Dendritic cell treated with granulocyte-macrophage colony-stimulating factor and Interleukin-4, amounts not matched to agents 40 ng/mL and 50 ng/mL, for 4 days (primary cell): ENCODE measurements at regions of chr21 and their contacts with region 1.

Region 1: DNA sequence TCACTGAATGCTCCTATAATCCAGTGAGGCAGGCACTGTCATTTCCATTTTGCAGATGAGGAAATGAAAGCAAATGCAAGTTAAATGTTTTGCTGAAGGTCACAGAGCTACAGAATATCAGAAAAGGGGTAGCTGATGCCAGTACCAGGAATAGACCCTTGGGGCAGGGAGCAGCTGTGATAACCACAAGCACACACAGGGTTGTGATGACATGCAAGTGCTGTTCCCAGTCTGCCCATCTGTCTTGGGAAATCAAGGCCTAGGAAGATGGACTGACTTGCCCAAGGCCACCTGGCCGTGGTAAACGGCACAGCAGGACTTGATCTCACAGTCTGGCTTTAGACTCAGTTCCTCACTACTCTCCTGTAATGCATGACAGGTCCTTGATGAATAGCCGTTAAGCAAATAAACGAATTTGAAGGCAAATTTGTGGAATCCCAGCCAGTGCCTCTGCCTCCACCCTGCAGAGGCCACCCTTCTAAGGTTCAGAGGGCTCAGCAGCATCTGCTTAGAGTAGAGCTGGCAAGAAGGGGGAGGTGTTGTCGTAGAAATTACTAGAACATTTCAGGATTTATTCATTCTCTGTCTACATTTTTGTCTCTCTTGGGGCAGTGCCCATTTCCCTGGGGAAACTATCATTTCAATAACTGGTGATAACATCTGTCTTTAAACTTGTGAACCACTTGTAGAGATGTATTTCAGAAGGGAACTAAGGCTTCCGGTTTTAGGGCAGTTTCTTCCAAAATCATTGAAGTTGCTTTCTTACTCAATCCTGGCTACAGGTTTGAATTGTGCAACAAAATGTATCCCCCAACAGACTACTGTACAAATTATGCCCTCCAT is 53.2 kb upstream of the MRPS6 start:
- H3K4me3 Mint-ChIP-seq: peak overlapping the region; percentile 13
- H3K27ac Mint-ChIP-seq: peak overlapping the region; percentile 74
- H3K4me1 Mint-ChIP-seq: peaks cover 32% of the 10 kb centered on the region
- H3K27me3 Mint-ChIP-seq: no peaks in the 10 kb centered on the region

Region 2: GRCh38 chr21:33924079-33924765 is 96.0 kb before region 1 on chr21:
- intact Hi-C with region 1: loop called (anchors 2 kb)
- H3K4me3 Mint-ChIP-seq: no peak overlapping the region
- H3K27ac Mint-ChIP-seq: peak overlapping the region; percentile 31
- H3K4me1 Mint-ChIP-seq: peaks cover 14% of the 10 kb centered on the region
- H3K27me3 Mint-ChIP-seq: peaks cover 11% of the 10 kb centered on the region

Region 3: GRCh38 chr21:33936301-33937038 is 83.8 kb before region 1 on chr21:
- intact Hi-C with region 1: loop called (anchors 5 kb)
- H3K4me3 Mint-ChIP-seq: no peak overlapping the region
- H3K27ac Mint-ChIP-seq: peak overlapping the region; percentile 64
- H3K4me1 Mint-ChIP-seq: peaks cover 70% of the 10 kb centered on the region
- H3K27me3 Mint-ChIP-seq: no peaks in the 10 kb centered on the region

Region 4: DNA sequence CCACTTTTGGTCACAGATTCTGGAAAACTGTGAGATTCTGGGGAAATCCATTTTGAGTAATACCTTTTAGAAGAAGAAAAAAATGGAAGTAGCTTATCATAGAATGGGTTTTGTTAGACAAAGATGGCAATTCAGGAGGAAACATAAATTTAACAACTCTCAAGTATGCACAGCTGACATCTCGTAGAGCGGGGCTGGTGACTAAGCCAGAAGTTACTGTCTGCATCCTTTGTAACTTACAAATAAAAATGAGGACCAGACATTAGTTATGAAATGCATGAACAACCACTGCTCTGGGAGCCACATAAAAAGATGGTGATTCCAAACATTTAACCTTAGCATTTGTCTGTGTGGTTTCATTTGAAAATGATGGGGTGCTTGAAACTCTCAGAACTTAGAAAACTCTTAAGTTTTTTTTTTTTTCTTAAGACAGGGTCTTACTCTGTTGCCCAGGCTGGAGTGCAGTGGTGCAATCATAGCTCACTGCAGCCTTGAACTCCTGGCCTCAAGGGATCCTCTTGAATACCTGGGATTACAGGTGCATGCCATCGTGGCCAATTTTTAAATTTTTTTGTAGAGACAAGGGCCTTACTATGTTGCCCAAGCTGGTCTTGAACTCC is 55.4 kb before region 1 on chr21:
- intact Hi-C with region 1: no loop called
- H3K4me3 Mint-ChIP-seq: no peak overlapping the region
- H3K27ac Mint-ChIP-seq: peak overlapping the region; percentile 20
- H3K4me1 Mint-ChIP-seq: peaks cover 41% of the 10 kb centered on the region
- H3K27me3 Mint-ChIP-seq: peaks cover 2% of the 10 kb centered on the region

Region 5: DNA sequence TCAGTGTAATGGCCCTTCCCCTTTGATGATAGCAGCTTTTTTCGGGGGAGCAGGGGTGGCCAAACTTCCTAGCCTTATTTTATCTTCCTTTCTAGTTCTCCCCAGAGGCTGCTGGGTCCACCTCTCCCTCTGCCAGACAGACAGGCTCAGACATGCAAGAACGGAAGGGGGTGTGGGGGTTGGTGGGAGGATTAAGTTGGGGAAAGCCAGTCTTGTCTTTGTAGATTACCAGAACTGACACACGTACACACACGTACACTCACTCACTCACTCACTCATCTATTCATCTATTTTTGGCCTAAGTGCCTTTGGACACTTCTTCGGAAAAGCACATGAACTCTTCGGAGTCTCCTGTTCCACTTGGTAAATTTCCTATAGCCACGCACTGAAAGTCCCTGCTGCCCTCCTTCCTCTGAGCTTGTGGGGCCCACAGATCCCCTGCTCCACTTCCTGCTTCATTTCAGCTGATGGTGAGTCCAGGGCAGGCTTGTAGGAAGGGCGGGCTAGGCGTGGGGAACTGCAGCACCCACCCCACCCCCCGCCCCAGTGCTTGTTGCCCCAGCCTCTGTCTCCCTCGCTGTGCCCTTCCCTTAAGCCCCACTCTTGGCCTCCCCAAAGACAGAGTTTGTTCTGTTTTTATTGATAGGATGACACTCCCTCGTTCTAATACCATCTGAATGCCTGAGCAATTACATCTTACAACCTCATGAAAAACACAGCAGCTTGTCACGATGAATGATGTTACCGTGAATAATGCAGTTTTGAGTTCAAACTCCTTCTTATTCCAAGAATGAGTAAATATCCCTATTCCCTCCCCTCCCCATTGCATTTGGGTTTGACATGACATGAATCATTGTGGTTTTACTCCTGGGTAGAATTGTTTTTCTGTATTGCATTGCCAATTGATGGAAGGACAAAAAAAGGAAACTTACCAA is 43.9 kb before region 1 on chr21:
- intact Hi-C with region 1: loop called (anchors 1 kb)
- H3K4me3 Mint-ChIP-seq: peak overlapping the region; percentile 64
- H3K27ac Mint-ChIP-seq: peak overlapping the region; percentile 99
- H3K4me1 Mint-ChIP-seq: peaks cover 77% of the 10 kb centered on the region
- H3K27me3 Mint-ChIP-seq: no peaks in the 10 kb centered on the region

Region 6: GRCh38 chr21:34055615-34056014 is 35.4 kb after region 1 on chr21:
- intact Hi-C with region 1: loop called (anchors 5 kb)
- H3K4me3 Mint-ChIP-seq: no peak overlapping the region
- H3K27ac Mint-ChIP-seq: peak overlapping the region; percentile 76
- H3K4me1 Mint-ChIP-seq: peaks cover 41% of the 10 kb centered on the region
- H3K27me3 Mint-ChIP-seq: peaks cover 1% of the 10 kb centered on the region

Region 7: GRCh38 chr21:34073032-34073869 is 53.0 kb after region 1 on chr21 and contains the starts of genes MRPS6 and SLC5A3:
- intact Hi-C with region 1: loop called (anchors 2 kb)
- H3K4me3 Mint-ChIP-seq: peak within 1 kb of the TSS; percentile 88
- H3K27ac Mint-ChIP-seq: peak within 1 kb of the TSS; percentile 91
- H3K4me1 Mint-ChIP-seq: peaks cover 48% of the 10 kb centered on the region
- H3K27me3 Mint-ChIP-seq: peaks cover 3% of the 10 kb centered on the region